Mammary epithelial cell (primary cell): ENCODE measurements at regions of chr1 and their contacts with region 1.

Region 1: DNA sequence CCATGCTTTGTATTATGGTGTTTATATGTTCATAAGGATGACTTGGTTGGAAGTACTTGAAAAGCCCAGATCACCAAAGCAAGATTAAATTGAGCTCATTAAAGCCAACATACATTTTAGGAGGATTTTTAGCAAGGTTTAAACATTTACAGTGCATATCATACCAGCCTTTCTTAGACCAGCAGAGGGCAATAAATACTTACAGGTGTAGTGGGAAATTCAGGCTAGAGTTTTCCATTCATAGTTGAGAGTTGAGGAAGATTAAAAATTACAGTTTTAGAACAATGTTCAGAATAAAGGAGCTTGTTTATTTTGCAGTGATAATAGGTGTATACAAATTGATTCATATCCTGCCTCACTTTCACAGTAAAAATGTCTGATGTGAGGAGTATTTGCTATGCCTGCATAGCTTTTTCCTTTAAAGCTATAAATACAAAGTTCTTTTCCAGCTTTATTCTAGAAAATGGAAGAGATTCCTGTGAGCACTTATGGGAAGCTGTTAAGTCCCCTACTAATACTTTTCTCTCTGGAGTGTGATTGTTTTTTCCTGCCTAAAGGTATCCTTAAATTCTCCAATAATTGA is 35.3 kb downstream of the DTL start:
- DNase-seq: peak; percentile 25
- H3K4me3 ChIP-seq: no peak overlapping the region
- H3K27ac ChIP-seq: no peak overlapping the region
- H3K4me1 ChIP-seq: no peaks in the 10 kb centered on the region
- H3K27me3 ChIP-seq: no peaks in the 10 kb centered on the region
- CTCF ChIP-seq: peak; percentile 62 to 76

Region 2: GRCh38 chr1:212291505-212292134 is 220.8 kb after region 1 on chr1:
- CTCF ChIA-PET with region 1: no interaction called
- dilution Hi-C with region 1: no loop called
- in situ Hi-C with region 1: loop called (anchors 10 kb)
- intact Hi-C with region 1: loop called (anchors 1 kb)
- DNase-seq: peak; percentile 50
- H3K4me3 ChIP-seq: no peak overlapping the region
- H3K27ac ChIP-seq: no peak overlapping the region
- H3K4me1 ChIP-seq: peaks cover 35% of the 10 kb centered on the region
- H3K27me3 ChIP-seq: no peaks in the 10 kb centered on the region
- CTCF ChIP-seq: peak; percentile 68 to 81

Region 3: GRCh38 chr1:212315907-212316306 is 245.1 kb after region 1 on chr1:
- CTCF ChIA-PET with region 1: no interaction called
- dilution Hi-C with region 1: no loop called
- in situ Hi-C with region 1: no loop called
- intact Hi-C with region 1: loop called (anchors 1 kb)
- DNase-seq: peak; percentile 34
- H3K4me3 ChIP-seq: no peak overlapping the region
- H3K27ac ChIP-seq: no peak overlapping the region
- H3K4me1 ChIP-seq: peaks cover 3% of the 10 kb centered on the region
- H3K27me3 ChIP-seq: no peaks in the 10 kb centered on the region
- CTCF ChIP-seq: peak; percentile 31 to 51

Region 4: GRCh38 chr1:212368073-212368484 is 297.3 kb after region 1 on chr1:
- CTCF ChIA-PET with region 1: no interaction called
- dilution Hi-C with region 1: no loop called
- in situ Hi-C with region 1: loop called in 1 of 2 experiments (anchors 10 kb)
- intact Hi-C with region 1: loop called (anchors 1 kb)
- DNase-seq: peak; percentile 54
- H3K4me3 ChIP-seq: no peak overlapping the region
- H3K27ac ChIP-seq: no peak overlapping the region
- H3K4me1 ChIP-seq: no peaks in the 10 kb centered on the region
- H3K27me3 ChIP-seq: no peaks in the 10 kb centered on the region
- CTCF ChIP-seq: peak; percentile 90 to 96

Region 5: DNA sequence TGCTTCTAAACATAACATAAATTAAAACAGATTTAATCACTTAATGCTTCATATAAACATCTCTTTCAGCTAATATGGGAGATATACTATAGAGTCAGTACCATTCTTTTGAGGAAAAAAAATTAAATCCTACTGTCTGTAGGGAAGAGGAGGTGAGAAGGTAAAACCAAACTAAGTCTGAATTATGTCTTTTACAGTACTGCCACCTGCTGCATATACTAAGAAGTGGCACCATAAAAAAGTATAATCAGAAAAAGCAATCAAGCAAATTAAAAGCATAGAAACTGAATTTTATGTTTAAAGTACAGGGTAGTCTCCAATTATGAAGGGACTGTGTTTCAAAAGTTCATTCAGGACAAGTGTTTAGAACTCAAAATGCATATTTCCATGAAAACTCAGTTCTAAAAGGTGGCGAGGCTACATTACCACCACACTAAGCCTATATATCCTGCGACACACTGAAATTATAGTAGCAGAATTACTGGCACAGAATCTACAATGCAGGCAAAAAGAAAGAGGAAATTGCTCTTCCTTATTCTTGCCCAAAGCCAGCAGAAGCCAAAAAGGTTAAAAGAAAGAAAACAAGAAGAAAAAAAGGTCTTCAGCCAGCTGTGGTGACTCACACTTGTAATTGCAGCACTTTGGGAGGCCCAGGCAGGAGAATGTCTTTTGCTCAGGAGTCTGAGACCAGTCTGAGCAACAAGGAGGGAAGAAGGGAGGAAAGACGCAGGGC is 711.8 kb after region 1 on chr1:
- CTCF ChIA-PET with region 1: no interaction called
- dilution Hi-C with region 1: no loop called
- in situ Hi-C with region 1: loop called (anchors 25 kb)
- intact Hi-C with region 1: loop called (anchors 10 kb)
- DNase-seq: peak; percentile 7
- H3K4me3 ChIP-seq: no peak overlapping the region
- H3K27ac ChIP-seq: no peak overlapping the region
- H3K4me1 ChIP-seq: no peaks in the 10 kb centered on the region
- H3K27me3 ChIP-seq: no peaks in the 10 kb centered on the region
- CTCF ChIP-seq: peak; percentile 52 to 57